Heart left ventricle (tissue), 16 donors: ENCODE measurements at regions of chr2 and their contacts with region 1.

Region 1: DNA sequence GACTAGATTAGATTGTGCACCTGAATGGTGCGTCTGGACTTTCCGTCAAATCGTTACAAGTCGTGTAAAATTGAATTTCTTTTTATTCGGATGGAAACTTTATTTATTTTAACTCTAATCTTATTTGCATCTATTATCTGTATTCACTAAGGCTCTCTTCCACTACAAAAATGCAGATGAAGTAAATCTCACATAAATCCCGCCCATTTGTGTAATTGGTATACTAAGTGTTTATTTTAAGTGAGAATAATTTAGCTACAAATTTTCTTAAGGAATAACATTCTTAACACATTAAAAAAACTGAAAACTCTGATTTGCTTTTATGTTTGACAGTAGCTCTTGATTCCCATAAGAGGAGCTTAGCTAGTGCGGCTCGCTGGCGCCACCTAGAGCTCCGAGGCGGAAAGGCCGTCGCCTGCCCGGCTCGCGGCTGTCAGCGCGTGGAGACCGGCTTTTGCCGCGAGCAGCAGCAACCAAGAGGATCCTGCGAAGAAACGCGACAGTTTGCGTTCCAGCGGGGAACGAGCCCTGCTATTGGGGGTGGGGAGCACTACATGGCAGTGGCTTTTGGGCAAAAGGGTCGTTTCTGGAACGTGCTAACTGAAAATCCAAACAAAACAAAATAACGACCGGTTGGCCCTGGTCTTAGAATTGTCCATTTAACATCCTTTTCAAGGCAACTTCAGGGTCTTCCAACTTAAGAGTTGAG is 6.7 kb downstream of the SP9 start:
- DNase-seq: peak; percentile 81 to 94 (median 82)
- ATAC-seq: peak; percentile 84 to 94 (median 90)
- H3K4me3 ChIP-seq: peak overlapping the region in 1 of 12 donors; percentile 28
- H3K27ac ChIP-seq: no peak overlapping the region
- H3K4me1 ChIP-seq: peaks cover 7 to 61% (median 33%) of the 10 kb centered on the region in 12 donors
- H3K27me3 ChIP-seq: peaks cover 69 to 95% (median 87%) of the 10 kb centered on the region in 9 donors
- CTCF ChIP-seq: peak; percentile 94 to 100 (median 98)
- POLR2A ChIP-seq: no peak

Region 2: GRCh38 chr2:173402405-173402974 is 939.0 kb before region 1 on chr2:
- intact Hi-C with region 1: loop called (anchors 1 to 5 kb)
- DNase-seq: peak; percentile 79 to 86 (median 81)
- ATAC-seq: peak; percentile 90 to 98 (median 96)
- H3K4me3 ChIP-seq: peak overlapping the region in 9 of 12 donors; percentile 21 to 41 (median 31)
- H3K27ac ChIP-seq: no peak overlapping the region
- H3K4me1 ChIP-seq: peaks cover 0 to 13% (median 0%) of the 10 kb centered on the region in 12 donors
- H3K27me3 ChIP-seq: peaks cover 0 to 57% (median 8%) of the 10 kb centered on the region in 9 donors
- CTCF ChIP-seq: peak; percentile 64 to 88 (median 83)
- POLR2A ChIP-seq: no peak

Region 3: GRCh38 chr2:173571021-173571882 is 770.2 kb before region 1 on chr2:
- intact Hi-C with region 1: loop called in 5 of 10 experiments (anchors 5 to 10 kb)
- DNase-seq: no peak
- ATAC-seq: peak in 3 of 4 donors; percentile 31 to 48 (median 42)
- H3K4me3 ChIP-seq: peak overlapping the region in 1 of 12 donors; percentile 5
- H3K27ac ChIP-seq: no peak overlapping the region
- H3K4me1 ChIP-seq: peaks cover 0 to 10% (median 0%) of the 10 kb centered on the region in 12 donors
- H3K27me3 ChIP-seq: peaks cover 0 to 6% (median 0%) of the 10 kb centered on the region in 9 donors
- CTCF ChIP-seq: peak in 10 of 12 donors; percentile 13 to 51 (median 37)
- POLR2A ChIP-seq: no peak

Region 4: DNA sequence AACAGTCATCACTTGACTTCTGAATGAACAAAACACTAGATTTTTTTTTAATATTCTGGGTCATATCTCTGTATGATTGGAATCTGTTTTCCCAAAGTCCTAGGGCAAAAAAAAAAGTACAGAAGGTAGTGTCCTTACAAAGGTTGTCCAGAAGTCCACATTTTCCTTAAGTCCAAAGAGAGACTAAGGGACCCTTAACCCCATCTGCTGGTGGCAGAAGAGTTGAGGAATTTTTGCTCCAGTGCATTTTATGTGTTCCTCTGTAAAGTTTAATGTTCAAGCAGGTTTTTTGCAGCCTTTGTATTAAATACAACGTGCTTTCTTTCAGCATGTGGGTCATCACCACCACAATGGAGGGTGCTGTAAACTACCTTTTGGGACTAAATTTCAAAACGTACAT is 592.1 kb before region 1 on chr2:
- intact Hi-C with region 1: loop called in 2 of 10 experiments (anchors 5 kb)
- DNase-seq: no peak
- ATAC-seq: no peak
- H3K4me3 ChIP-seq: no peak overlapping the region
- H3K27ac ChIP-seq: no peak overlapping the region
- H3K4me1 ChIP-seq: peaks cover 0 to 10% (median 1%) of the 10 kb centered on the region in 12 donors
- H3K27me3 ChIP-seq: peaks cover 0 to 7% (median 0%) of the 10 kb centered on the region in 9 donors
- CTCF ChIP-seq: peak in 5 of 12 donors; percentile 20 to 29 (median 24)
- POLR2A ChIP-seq: no peak

Region 5: DNA sequence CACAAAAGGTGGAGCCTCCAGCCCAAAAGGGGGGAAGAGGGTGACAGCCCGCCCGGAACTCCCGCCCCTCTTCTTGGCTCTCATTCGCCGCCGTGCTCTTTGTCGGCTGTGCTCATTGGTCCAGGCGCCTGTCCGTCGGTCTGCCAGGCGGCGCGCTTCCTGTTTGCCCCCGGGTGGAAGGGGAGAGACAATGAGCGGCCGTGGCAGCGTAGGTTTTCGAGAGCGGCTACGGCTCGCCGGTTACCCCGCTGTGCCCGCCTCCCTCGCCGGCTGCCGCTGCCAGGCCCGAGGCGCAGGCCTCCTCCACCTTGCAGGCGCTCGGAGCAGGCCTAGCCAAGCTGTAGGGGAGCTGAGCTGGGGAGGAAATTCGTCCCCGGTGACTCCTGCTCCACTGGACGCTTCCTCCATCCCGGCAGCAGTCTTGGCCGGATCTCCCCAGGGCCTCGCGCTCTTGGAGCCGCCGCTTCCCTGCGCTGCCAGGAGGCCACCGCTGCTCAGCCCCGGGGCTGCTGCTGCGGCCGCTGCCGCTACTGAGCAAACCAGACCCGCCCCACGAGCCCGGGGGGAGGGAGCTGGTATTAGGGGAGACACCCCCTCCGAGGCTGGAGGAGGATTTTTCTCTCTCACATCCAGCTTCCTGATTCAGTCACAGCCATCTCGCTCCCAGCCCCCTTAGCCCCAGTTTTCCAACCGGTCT is 376.0 kb before region 1 on chr2 and contains the start of gene SP3:
- intact Hi-C with region 1: loop called in 1 of 10 experiments (anchors 10 kb)
- DNase-seq: peak; percentile 99
- ATAC-seq: peak; percentile 90 to 95 (median 92)
- H3K4me3 ChIP-seq: peak within 1 kb of the TSS; percentile 72 to 100 (median 96)
- H3K27ac ChIP-seq: peak within 1 kb of the TSS; percentile 97 to 100 (median 100)
- H3K4me1 ChIP-seq: peaks cover 0 to 40% (median 24%) of the 10 kb centered on the region in 12 donors
- H3K27me3 ChIP-seq: no peaks in the 10 kb centered on the region
- CTCF ChIP-seq: peak in 2 of 12 donors; percentile 7 to 19
- POLR2A ChIP-seq: peak; percentile 15 to 94
- total RNA-seq, gene SP3: 32.2 to 61.5 (median 42.0) TPM

Region 6: GRCh38 chr2:174158003-174158402 is 183.4 kb before region 1 on chr2:
- intact Hi-C with region 1: loop called in 9 of 10 experiments (anchors 5 to 10 kb)
- DNase-seq: no peak
- ATAC-seq: no peak
- H3K4me3 ChIP-seq: no peak overlapping the region
- H3K27ac ChIP-seq: no peak overlapping the region
- H3K4me1 ChIP-seq: peaks cover 0 to 16% (median 2%) of the 10 kb centered on the region in 12 donors
- H3K27me3 ChIP-seq: no peaks in the 10 kb centered on the region
- CTCF ChIP-seq: peak; percentile 17 to 55 (median 34)
- POLR2A ChIP-seq: no peak

Region 7: DNA sequence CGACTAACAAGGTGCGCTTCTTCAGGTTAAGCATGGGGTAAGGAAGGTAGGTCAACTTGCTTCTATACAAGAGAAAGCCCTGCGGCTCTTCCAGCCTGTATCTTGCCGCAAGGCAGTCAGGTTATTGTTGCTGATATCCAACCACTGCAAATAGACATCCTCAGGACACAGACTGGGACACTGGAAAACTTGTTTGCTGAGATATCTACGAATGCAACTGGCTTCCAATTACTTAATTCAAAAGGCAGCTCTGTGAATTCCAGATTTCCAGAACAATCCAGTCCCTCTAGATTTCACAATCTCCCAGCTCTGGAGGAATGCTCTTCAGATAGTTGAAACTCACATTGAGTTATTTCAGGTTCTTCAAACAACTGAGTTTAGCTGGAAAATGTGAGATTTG is 41.4 kb before region 1 on chr2:
- intact Hi-C with region 1: no loop called
- DNase-seq: no peak
- ATAC-seq: no peak
- H3K4me3 ChIP-seq: no peak overlapping the region
- H3K27ac ChIP-seq: no peak overlapping the region
- H3K4me1 ChIP-seq: no peaks in the 10 kb centered on the region
- H3K27me3 ChIP-seq: peaks cover 0 to 15% (median 0%) of the 10 kb centered on the region in 9 donors
- CTCF ChIP-seq: no peak
- POLR2A ChIP-seq: no peak

Region 8: GRCh38 chr2:174631009-174631981 is 289.9 kb after region 1 on chr2:
- intact Hi-C with region 1: no loop called
- DNase-seq: no peak
- ATAC-seq: no peak
- H3K4me3 ChIP-seq: peak overlapping the region in 1 of 12 donors; percentile 63
- H3K27ac ChIP-seq: peak overlapping the region in 2 of 12 donors; percentile 35 to 94
- H3K4me1 ChIP-seq: peaks cover 0 to 92% (median 32%) of the 10 kb centered on the region in 12 donors
- H3K27me3 ChIP-seq: no peaks in the 10 kb centered on the region
- CTCF ChIP-seq: no peak
- POLR2A ChIP-seq: no peak